ENCODE measurements at regions of chr11 and their contacts with region 1.

Region 1: DNA sequence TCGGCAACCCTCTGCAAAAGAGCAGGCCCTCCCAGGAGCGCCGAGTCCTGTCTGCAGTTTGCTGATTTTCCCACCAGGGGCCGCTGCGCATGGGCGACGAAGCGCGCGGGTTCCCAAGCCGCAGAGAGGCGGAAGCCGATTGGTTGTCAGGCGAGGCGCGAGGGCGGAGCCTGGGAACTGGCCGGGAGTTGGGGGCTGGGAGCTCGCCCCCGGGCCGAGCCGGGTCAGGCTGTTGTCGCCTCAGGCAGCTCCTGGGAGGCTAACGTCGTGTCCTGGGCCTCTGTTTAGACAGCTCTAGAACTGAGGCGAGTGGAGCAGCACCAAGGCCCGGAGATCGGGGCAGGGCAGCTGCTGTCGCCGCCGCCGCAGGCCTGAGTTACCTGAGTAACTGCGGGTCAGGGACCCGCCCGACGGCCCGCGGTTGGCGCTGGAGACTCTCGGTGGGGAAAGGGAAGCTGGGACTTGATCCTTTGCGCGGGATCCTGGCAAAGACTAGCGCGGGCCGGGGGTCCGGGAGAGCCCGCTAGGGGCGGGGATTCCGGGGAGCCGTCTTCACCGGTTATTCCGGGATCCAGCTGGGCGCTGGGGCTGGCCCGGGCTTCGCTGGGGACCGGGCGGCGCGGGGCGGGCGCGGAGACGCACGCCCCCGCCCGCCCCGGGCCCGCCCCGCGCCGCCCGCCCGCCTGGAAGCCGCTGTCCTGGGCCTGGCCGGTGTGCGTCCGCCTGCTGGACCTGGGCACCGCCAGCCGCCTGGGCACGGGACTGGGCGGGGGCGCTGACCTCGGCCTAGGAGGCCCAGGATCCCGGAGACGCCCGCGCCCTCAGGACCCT is at the start of gene STIM1:
- DNase-seq: peak; percentile 95
- ATAC-seq: peak; percentile 89
- H3K4me3 ChIP-seq: peak within 1 kb of the TSS; percentile 93
- H3K27ac ChIP-seq: peak within 1 kb of the TSS; percentile 35
- H3K4me1 ChIP-seq: peaks cover 31% of the 10 kb centered on the region
- H3K27me3 ChIP-seq: no peaks in the 10 kb centered on the region
- CTCF ChIP-seq: peak; percentile 83
- total RNA-seq, gene STIM1: 22.8 and 31.9 TPM in 2 replicates

Region 2: DNA sequence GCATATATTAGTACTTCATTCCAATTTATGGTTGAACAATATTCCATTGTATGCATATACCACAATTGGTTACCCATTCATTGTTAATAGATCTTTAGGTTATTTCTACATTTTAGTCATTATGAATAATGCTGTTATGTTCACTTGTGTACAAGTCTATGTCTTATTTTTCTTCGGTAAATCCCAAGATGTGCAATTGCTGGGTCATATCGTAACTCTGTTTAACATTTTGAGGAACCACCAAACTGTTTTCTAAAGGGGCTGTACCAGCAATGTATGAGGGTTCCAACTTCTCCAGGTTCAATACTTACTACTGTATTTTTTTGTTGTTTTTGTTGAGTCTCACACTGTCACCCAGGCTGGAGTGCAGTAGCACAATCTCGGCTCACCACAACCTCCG is 90.9 kb before region 1 on chr11:
- CTCF ChIA-PET with region 1: no interaction called
- POLR2A ChIA-PET with region 1: no interaction called
- intact Hi-C with region 1: no loop called
- DNase-seq: no peak
- ATAC-seq: no peak
- H3K4me3 ChIP-seq: no peak overlapping the region
- H3K27ac ChIP-seq: no peak overlapping the region
- H3K4me1 ChIP-seq: no peaks in the 10 kb centered on the region
- H3K27me3 ChIP-seq: no peaks in the 10 kb centered on the region
- CTCF ChIP-seq: no peak

Region 3: DNA sequence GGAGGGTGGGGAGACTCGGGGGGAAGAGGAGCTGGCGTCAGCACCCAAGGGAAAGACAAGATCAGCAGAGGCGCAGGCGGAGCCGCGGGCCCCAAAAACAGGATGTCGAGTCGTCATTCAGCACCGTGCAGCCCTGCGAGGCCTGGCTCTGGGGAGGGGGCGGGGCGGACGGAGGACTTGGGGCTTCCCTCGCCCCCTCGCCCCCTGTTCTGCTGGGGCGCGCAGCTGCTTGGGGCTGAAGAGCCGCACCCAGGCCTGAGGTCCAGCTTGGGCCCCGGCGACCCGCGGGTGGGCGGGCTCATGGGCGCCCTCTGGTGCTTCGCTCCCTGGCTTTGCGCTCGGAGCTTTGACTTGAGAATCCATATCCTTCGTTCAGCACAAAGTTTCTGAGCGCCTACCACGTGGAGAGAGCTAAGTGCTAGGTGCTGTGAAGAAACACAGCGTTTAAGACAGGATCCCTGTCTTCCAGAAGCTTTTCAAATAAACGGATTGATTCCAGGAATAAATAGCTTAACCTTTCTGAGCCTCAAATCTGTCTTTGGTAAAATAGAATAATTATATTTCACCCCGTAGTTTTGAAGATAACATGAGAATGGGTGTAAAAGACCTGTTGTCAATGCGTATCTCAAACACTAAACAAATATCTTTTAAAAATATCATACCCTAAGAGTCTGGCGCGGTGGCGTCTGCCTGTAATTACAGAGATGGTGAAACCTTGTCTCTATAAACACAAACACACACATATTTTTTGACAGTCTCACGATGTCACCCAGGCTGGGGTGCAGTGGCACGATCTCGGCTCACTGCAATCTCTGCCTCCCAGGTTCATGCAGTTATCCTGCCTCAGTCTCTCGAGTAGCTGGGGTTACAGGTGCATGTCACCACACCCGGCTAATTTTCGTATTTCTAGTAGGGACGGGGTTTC is 13.5 kb before region 1 on chr11:
- CTCF ChIA-PET with region 1: interaction called, 8 read pairs
- POLR2A ChIA-PET with region 1: interaction called, 4 read pairs
- intact Hi-C with region 1: loop called (anchors 1 kb)
- DNase-seq: peak; percentile 83
- ATAC-seq: peak; percentile 69
- H3K4me3 ChIP-seq: peak overlapping the region; percentile 94
- H3K27ac ChIP-seq: peak overlapping the region; percentile 74
- H3K4me1 ChIP-seq: peaks cover 17% of the 10 kb centered on the region
- H3K27me3 ChIP-seq: no peaks in the 10 kb centered on the region
- CTCF ChIP-seq: peak; percentile 73

Region 4: DNA sequence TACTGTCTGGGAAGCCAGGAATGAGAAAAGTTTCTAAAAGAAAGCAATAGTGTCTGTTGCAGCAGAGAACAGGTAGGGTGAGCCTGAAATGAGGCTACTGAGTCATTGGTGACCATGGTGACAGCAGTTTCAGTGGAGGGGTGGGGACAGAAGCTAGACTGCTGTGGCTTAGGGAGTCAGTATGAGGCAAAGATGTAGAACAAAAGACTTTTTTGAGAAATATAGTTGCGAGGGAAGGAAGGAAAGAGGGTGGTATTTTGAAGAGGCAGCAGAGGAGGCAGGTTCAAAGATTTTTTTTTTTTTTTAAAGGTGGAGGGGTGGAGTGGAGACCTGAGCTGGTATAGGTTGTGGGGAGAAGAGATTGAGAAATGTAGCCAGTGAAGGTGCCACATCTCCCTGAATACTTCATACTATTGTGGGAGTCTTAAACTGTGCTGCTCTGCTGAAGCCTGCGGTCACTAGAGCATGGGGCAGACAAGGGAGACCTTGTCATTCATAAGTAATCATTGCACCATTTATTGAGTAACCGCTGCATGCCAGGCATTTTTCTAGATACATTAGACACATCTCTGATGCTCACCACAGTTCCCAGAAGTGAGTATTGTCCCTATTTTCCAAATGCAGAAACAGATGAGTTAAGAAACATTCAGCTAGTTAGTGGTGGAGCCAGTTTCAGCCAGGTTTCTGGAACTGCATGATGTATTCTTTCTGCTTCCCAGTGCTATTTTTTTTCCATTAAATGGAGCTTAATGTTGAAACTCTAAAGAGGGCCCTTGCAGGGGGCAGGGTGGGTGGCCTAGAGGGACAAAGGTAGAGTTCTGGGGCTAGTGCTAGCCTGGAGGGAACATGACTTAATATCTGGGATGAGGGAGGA is 50.1 kb after region 1 on chr11:
- CTCF ChIA-PET with region 1: interaction called, 10 read pairs
- POLR2A ChIA-PET with region 1: no interaction called
- intact Hi-C with region 1: loop called (anchors 10 kb)
- DNase-seq: peak; percentile 91
- ATAC-seq: peak; percentile 91
- H3K4me3 ChIP-seq: peak overlapping the region; percentile 59
- H3K27ac ChIP-seq: peak overlapping the region; percentile 89
- H3K4me1 ChIP-seq: peaks cover 52% of the 10 kb centered on the region
- H3K27me3 ChIP-seq: no peaks in the 10 kb centered on the region
- CTCF ChIP-seq: no peak

Region 5: DNA sequence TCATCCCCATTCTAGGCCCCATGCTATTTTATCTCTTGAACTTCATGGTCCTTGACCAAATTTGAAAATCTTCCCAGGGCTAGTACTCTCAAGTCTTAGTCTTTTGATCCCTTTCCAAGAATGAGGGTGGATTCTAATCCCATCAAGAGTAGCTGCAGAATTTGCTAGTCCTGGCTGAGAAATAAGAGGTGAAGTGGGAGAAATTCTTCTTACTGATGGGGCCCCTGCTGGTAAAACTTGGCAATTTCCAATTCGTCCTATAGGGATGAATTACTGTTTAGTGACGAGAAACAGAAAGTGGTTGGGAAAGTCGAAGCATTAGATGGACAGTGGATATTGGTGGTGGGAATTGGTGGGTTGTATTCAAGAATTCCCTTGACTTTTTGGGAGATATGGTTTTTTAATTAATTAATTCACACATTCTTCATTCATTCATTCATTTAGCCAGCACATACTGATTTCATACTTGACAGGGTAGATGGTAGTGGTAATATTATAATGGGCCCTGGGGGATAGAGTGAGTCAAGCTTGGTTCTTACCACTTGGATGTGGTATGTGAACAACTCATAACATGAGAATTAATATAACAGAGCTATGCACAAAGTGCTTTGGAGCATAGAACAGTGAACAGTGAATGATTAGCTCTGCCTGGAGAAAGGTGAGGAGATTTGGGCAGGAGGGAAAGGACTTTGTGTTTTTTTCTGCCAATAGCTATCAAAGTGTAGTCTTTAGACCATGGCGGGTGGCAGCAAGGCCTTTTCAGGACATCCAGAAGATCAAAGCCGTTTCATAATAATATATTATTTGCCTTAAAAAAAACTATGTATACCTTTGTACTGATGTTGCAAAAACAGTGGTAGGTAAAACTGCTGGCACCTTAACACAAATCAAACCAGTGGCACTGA is 104.1 kb after region 1 on chr11:
- CTCF ChIA-PET with region 1: interaction called, 7 read pairs
- POLR2A ChIA-PET with region 1: no interaction called
- intact Hi-C with region 1: loop called (anchors 2 kb)
- DNase-seq: peak; percentile 60
- ATAC-seq: peak; percentile 33
- H3K4me3 ChIP-seq: no peak overlapping the region
- H3K27ac ChIP-seq: no peak overlapping the region
- H3K4me1 ChIP-seq: peaks cover 31% of the 10 kb centered on the region
- H3K27me3 ChIP-seq: no peaks in the 10 kb centered on the region
- CTCF ChIP-seq: peak; percentile 61

Region 6: GRCh38 chr11:4064278-4064955 is 209.2 kb after region 1 on chr11:
- CTCF ChIA-PET with region 1: interaction called, 11 read pairs
- POLR2A ChIA-PET with region 1: no interaction called
- intact Hi-C with region 1: no loop called
- DNase-seq: no peak
- ATAC-seq: no peak; the same call in 1 of the 2 replicates
- H3K4me3 ChIP-seq: no peak overlapping the region
- H3K27ac ChIP-seq: no peak overlapping the region
- H3K4me1 ChIP-seq: peaks cover 17% of the 10 kb centered on the region
- H3K27me3 ChIP-seq: no peaks in the 10 kb centered on the region
- CTCF ChIP-seq: no peak

Region 7: GRCh38 chr11:4072668-4073285 is 217.6 kb after region 1 on chr11:
- CTCF ChIA-PET with region 1: interaction called, 28 read pairs
- POLR2A ChIA-PET with region 1: no interaction called
- intact Hi-C with region 1: no loop called
- DNase-seq: peak; percentile 81
- ATAC-seq: peak; percentile 93
- H3K4me3 ChIP-seq: no peak overlapping the region
- H3K27ac ChIP-seq: no peak overlapping the region
- H3K4me1 ChIP-seq: no peaks in the 10 kb centered on the region
- H3K27me3 ChIP-seq: no peaks in the 10 kb centered on the region
- CTCF ChIP-seq: peak; percentile 80

Region 8: GRCh38 chr11:4125141-4125540 is 269.9 kb after region 1 on chr11:
- CTCF ChIA-PET with region 1: no interaction called
- POLR2A ChIA-PET with region 1: no interaction called
- intact Hi-C with region 1: no loop called
- DNase-seq: peak; percentile 9
- ATAC-seq: no peak
- H3K4me3 ChIP-seq: no peak overlapping the region
- H3K27ac ChIP-seq: no peak overlapping the region
- H3K4me1 ChIP-seq: no peaks in the 10 kb centered on the region
- H3K27me3 ChIP-seq: no peaks in the 10 kb centered on the region
- CTCF ChIP-seq: no peak

Region 9: GRCh38 chr11:4187055-4187988 is 332.1 kb after region 1 on chr11:
- CTCF ChIA-PET with region 1: interaction called, 20 read pairs
- POLR2A ChIA-PET with region 1: no interaction called
- intact Hi-C with region 1: no loop called
- DNase-seq: peak; percentile 83
- ATAC-seq: peak; percentile 92
- H3K4me3 ChIP-seq: peak overlapping the region; percentile 80
- H3K27ac ChIP-seq: no peak overlapping the region
- H3K4me1 ChIP-seq: no peaks in the 10 kb centered on the region; the same call in 1 of the 2 replicates
- H3K27me3 ChIP-seq: no peaks in the 10 kb centered on the region
- CTCF ChIP-seq: peak; percentile 78